ENCODE measurements at regions of chr2 and their contacts with region 1.

Region 1: GRCh38 chr2:118013724-118014491 is at the start of gene CCDC93:
- DNase-seq: peak; percentile 72
- ATAC-seq: peak; percentile 90
- H3K4me3 ChIP-seq: peak within 1 kb of the TSS; percentile 73 to 99 (median 96)
- H3K27ac ChIP-seq: peak within 1 kb of the TSS; percentile 75
- H3K4me1 ChIP-seq: peaks cover 29% of the 10 kb centered on the region
- H3K27me3 ChIP-seq: no peaks in the 10 kb centered on the region; a peak in 1 of 5 replicates
- CTCF ChIP-seq: 0 out of 2 replicates have a peak, but pooled peaks have one; percentile 1
- EP300 ChIP-seq: peak in 1 of 2 experiments; percentile 15; a peak in 1 of 4 replicates
- POLR2A ChIP-seq: peak; percentile 72 to 95
- RAD21 ChIP-seq: peak; percentile 4; the same call in 1 of the 2 replicates
- total RNA-seq, gene CCDC93: 28.7 and 37.2 TPM in 2 replicates

Region 2: GRCh38 chr2:117814417-117815264 is 199.3 kb before region 1 on chr2 and contains the start of gene DDX18:
- CTCF ChIA-PET with region 1: no interaction called
- POLR2A ChIA-PET with region 1: interaction called, 11 read pairs
- in situ Hi-C with region 1: no loop called
- intact Hi-C with region 1: no loop called
- DNase-seq: peak; percentile 99
- ATAC-seq: peak; percentile 98
- H3K4me3 ChIP-seq: peak within 1 kb of the TSS; percentile 85 to 96 (median 90)
- H3K27ac ChIP-seq: peak within 1 kb of the TSS; percentile 80
- H3K4me1 ChIP-seq: peaks cover 31% of the 10 kb centered on the region
- H3K27me3 ChIP-seq: no peaks in the 10 kb centered on the region; a peak in 1 of 5 replicates
- CTCF ChIP-seq: peak; percentile 100
- EP300 ChIP-seq: peak; percentile 9 to 60; a peak in 2 of 4 replicates
- POLR2A ChIP-seq: peak; percentile 91 to 95
- RAD21 ChIP-seq: peak; percentile 89
- total RNA-seq, gene DDX18: 134 and 234 TPM in 2 replicates

Measured in HepG2 (cell line).